Heart left ventricle (tissue), 16 donors: ENCODE measurements at regions of chr1 and their contacts with region 1.

Region 1: DNA sequence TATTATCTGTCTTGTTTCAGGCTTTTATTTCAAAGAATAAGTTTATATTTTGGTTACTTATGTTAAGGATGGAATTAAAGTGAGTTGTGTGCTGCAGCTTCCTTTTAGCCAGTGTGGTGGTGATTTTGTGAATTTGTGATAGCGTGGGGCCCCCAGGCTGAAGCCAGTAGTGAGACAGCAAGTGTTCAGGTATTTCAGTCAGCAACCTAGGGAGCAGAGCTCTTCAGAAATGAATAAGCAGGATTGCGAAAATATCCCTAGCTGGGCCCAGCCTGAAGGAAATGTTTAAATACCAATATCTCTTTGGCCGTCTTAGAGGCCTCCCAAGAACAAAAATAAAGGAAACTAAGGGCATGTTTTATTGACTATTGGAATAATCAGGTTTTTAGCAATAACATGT is 150.8 kb upstream of the C1orf105 start:
- DNase-seq: no peak
- ATAC-seq: no peak
- H3K4me3 ChIP-seq: no peak overlapping the region
- H3K27ac ChIP-seq: no peak overlapping the region
- H3K4me1 ChIP-seq: peaks cover 0 to 11% (median 0%) of the 10 kb centered on the region in 12 donors
- H3K27me3 ChIP-seq: no peaks in the 10 kb centered on the region
- CTCF ChIP-seq: no peak
- POLR2A ChIP-seq: no peak

Region 2: GRCh38 chr1:172095846-172096245 is 173.8 kb before region 1 on chr1:
- intact Hi-C with region 1: no loop called
- DNase-seq: no peak
- ATAC-seq: no peak
- H3K4me3 ChIP-seq: no peak overlapping the region
- H3K27ac ChIP-seq: no peak overlapping the region
- H3K4me1 ChIP-seq: no peaks in the 10 kb centered on the region
- H3K27me3 ChIP-seq: no peaks in the 10 kb centered on the region
- CTCF ChIP-seq: no peak
- POLR2A ChIP-seq: no peak

Region 3: DNA sequence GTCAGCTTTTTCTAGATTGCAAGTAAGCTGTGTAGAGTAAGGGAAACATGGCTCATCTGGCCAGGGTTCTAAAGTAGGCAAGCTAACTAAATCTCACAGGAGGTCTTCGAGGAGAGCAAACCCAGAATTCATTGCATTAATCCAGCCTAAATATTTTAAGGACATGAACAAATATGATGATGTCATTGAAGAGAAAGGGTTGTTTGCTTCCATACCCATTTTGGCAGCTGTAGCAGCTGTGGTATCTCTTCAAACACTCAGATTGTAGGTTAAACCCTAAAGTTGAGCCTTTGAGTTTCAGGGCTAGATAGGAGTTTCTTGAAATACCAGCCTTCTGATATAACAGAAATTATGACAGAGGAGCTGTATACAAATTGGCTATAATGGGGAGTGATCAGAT is 49.7 kb before region 1 on chr1:
- intact Hi-C with region 1: loop called in 1 of 10 experiments (anchors 5 kb)
- DNase-seq: no peak
- ATAC-seq: no peak
- H3K4me3 ChIP-seq: no peak overlapping the region
- H3K27ac ChIP-seq: no peak overlapping the region
- H3K4me1 ChIP-seq: no peaks in the 10 kb centered on the region
- H3K27me3 ChIP-seq: no peaks in the 10 kb centered on the region
- CTCF ChIP-seq: no peak
- POLR2A ChIP-seq: no peak